Dorsolateral prefrontal cortex (tissue), 120 donors: ENCODE measurements at regions of chr16 and their contacts with region 1.

Region 1: GRCh38 chr16:3059000-3059722 is 6.3 kb upstream of the IL32 start:
- DNase-seq: peak; percentile 46 to 90 (median 68)
- H3K4me3 ChIP-seq: peak overlapping the region; percentile 57 to 95 (median 87)
- H3K27ac ChIP-seq: peak overlapping the region in 50 of 59 donors; percentile 7 to 90 (median 67)
- H3K27me3 ChIP-seq: no peaks in the 10 kb centered on the region
- CTCF ChIP-seq: peak; percentile 56 to 98 (median 90)

Region 2: DNA sequence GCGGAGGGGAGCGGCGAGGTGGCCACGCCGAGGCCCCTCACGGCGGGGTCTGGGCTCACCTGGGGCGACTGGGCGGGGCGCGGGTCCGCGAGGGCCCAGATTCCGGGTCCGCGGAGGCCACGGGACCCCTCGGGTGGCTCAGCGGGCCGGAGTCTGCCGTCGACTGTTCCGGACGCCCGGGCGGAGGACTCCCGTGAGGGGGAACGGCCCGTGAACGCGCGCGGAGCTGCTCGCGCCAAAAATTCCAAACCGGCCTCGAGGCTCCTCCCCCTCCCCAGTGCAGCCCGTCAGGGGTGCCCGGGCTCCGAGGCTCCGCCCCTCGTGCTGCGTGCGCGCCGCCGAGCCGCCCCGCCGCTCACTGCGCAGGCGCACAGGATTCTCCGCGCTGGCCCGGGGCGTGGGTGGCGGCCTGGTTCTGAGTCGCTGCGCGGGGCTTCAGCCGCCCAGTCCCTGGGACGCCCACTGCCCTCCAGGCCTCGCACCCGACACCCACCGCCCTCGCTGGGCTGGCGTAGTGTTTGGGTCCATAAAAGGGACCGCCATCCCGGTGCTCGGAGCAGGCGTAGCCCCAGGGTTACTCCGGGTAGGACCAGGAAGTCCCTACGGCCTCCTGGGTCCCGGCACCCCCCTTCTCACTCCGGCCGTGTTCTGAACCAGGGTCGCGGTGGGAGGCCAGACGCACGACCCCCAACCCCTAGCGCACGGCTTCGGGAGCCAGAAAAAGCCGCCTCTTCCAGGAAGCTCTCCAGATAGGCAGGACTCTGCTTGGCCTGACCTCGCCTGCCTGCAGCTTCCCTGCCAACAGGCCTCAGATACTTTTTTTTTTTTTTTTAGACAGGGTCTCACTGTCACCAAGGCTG is 78.7 kb before region 1 on chr16 and contains the start of gene PKMYT1:
- intact Hi-C with region 1: no loop called
- DNase-seq: peak; percentile 76 to 97 (median 85)
- H3K4me3 ChIP-seq: peak within 1 kb of the TSS; percentile 44 to 100 (median 84)
- H3K27ac ChIP-seq: peak within 1 kb of the TSS in 52 of 59 donors; percentile 26 to 92 (median 80)
- H3K27me3 ChIP-seq: peaks cover 0 to 6% (median 0%) of the 10 kb centered on the region in 45 donors
- CTCF ChIP-seq: peak in 35 of 56 donors; percentile 6 to 61 (median 33)
- total RNA-seq, gene PKMYT1: 2.7 to 18.6 (median 8.3) TPM

Region 3: DNA sequence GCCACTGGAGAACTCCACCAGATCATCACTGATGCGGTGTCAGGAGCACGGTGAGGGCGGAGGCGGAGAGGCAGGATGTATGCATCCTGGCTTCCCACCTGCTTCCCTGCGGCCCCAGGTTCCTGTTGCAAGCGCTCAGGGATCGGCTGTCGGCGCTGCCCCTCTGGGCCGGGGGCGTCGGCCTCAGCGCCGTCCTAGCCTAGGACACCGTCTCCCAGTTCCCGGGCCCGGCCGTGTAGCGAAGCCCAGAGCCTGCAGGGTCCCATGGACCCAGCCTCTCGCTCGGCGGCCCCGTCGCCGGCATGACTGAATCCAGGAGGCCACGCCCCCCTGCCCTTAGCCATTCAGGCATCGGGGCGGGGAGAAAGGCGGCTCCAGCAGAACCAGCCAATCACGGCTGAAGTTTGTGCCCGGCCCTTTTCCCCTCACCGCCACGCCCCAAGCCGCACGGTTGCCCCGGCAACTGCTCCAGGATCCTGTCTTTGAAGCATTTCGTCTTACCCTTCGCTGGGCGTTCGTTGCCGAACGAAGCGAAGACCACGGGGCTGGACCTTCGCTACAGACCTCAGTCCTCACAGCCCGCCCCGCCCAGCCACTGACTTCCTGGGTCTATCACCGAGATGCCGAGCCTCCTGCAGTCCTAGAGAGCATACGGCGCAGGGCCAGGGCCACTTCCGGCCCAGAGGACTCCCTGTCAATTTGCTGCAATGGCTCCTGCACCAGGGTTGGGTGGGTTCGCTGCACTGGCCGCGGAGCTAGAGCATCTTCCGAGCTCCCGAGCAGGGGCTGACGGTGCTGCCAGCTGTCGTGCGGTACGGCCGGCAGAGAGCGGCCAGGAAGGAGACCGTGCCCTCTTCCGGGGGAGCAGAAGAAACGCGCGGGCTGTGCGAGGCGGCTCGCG is 65.1 kb after region 1 on chr16:
- intact Hi-C with region 1: loop called (anchors 5 kb)
- DNase-seq: peak; percentile 91 to 98 (median 96)
- H3K4me3 ChIP-seq: peak overlapping the region; percentile 42 to 98 (median 82)
- H3K27ac ChIP-seq: peak overlapping the region in 57 of 59 donors; percentile 3 to 91 (median 76)
- H3K27me3 ChIP-seq: no peaks in the 10 kb centered on the region
- CTCF ChIP-seq: peak in 33 of 56 donors; percentile 2 to 57 (median 20)

Region 4: GRCh38 chr16:3129137-3130131 is 70.3 kb after region 1 on chr16:
- intact Hi-C with region 1: loop called (anchors 5 kb)
- DNase-seq: peak in 9 of 10 donors; percentile 66 to 81 (median 76)
- H3K4me3 ChIP-seq: peak overlapping the region; percentile 23 to 78 (median 60)
- H3K27ac ChIP-seq: peak overlapping the region; percentile 22 to 99 (median 84)
- H3K27me3 ChIP-seq: no peaks in the 10 kb centered on the region
- CTCF ChIP-seq: peak; percentile 69 to 96 (median 91)